Testis (tissue), 5 donors: ENCODE measurements at regions of chr5 and their contacts with region 1.

Region 1: GRCh38 chr5:10091701-10092100 is 158.0 kb downstream of the ATPSCKMT start:
- DNase-seq: no peak
- H3K4me3 ChIP-seq: no peak overlapping the region
- H3K27ac ChIP-seq: no peak overlapping the region
- H3K4me1 ChIP-seq: no peaks in the 10 kb centered on the region
- H3K27me3 ChIP-seq: no peaks in the 10 kb centered on the region
- CTCF ChIP-seq: no peak
- POLR2A ChIP-seq: no peak

Region 2: DNA sequence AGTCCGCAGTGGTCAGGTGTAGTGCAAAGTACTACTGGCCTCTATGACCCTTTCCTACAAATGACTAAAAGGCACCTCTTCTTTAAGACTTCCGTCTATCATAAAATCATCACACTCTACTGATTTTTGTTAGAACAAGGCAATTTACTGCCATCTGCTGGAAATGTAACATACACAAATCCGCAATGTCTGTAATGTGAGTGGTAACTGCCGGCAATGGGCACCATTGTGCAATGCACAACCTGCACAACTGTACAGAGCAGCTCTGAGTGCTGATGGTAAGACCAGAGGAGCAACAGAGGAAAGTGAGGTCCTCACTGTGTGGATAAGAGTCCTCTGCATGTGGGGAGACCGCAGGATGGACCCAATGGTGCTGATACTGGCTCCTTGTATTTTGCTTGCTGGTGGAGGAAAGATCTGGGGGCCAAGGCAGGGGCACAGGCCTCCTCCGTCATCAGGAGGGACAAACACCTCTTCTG is 54.3 kb after region 1 on chr5:
- intact Hi-C with region 1: no loop called
- DNase-seq: no peak
- H3K4me3 ChIP-seq: no peak overlapping the region
- H3K27ac ChIP-seq: no peak overlapping the region
- H3K4me1 ChIP-seq: peaks cover 3% of the 10 kb centered on the region
- H3K27me3 ChIP-seq: no peaks in the 10 kb centered on the region
- CTCF ChIP-seq: peak in 1 of 3 experiments; percentile 8
- POLR2A ChIP-seq: no peak

Region 3: GRCh38 chr5:10201223-10201868 is 109.6 kb after region 1 on chr5:
- intact Hi-C with region 1: no loop called
- DNase-seq: peak; percentile 21
- H3K4me3 ChIP-seq: no peak overlapping the region
- H3K27ac ChIP-seq: no peak overlapping the region
- H3K4me1 ChIP-seq: no peaks in the 10 kb centered on the region
- H3K27me3 ChIP-seq: no peaks in the 10 kb centered on the region
- CTCF ChIP-seq: peak in 1 of 3 experiments; percentile 28
- POLR2A ChIP-seq: no peak

Region 4: DNA sequence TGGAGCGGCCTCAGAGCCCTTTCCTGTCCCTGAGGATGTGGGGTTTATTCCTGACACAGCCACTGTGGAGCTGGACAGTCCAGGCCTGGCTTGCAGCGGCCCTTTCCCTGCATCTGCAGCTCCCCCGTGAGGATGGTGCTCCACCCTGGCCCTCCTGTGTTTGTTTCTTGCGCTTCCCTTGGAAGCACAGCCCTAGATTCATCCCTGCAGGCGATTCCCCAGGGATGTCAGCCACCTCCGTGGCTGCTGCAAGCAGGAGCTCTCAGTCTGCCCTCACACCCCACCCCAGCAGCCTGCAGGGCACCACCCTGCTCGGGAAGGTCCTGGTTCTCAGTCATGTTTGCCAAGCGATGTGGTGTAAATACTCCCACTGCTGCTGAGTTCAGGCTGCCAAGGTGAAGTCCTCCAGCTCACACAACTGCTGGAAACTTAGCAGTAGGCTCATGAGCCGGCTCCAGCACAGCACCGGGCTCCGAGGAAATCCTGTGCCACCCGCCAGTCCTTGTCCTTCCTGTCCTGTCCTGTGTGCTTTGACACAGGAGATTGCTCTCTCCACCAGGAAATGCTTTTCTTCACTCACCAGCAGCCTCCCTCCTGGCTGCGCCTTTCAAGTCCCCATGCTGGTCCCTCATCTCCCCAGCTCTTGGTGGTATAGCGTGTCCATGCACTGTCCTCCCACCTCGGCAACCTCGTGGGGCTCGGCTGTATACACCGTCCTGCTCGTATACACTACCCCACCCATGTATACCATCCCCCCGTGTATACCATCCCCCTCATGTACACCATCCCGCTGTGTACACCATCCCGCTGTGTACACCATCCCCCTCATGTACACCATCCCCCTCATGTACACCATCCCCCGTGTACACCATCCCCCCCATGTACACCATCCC is 366.2 kb after region 1 on chr5:
- intact Hi-C with region 1: no loop called
- DNase-seq: no peak
- H3K4me3 ChIP-seq: no peak overlapping the region
- H3K27ac ChIP-seq: no peak overlapping the region
- H3K4me1 ChIP-seq: no peaks in the 10 kb centered on the region
- H3K27me3 ChIP-seq: no peaks in the 10 kb centered on the region
- CTCF ChIP-seq: no peak
- POLR2A ChIP-seq: no peak

Region 5: GRCh38 chr5:10479226-10479721 is 387.6 kb after region 1 on chr5:
- intact Hi-C with region 1: loop called (anchors 10 kb)
- DNase-seq: no peak
- H3K4me3 ChIP-seq: no peak overlapping the region
- H3K27ac ChIP-seq: no peak overlapping the region
- H3K4me1 ChIP-seq: no peaks in the 10 kb centered on the region
- H3K27me3 ChIP-seq: no peaks in the 10 kb centered on the region
- CTCF ChIP-seq: no peak
- POLR2A ChIP-seq: no peak